Activated naive CD4-positive, alpha-beta T cell treated with anti-CD3 and anti-CD28 coated beads for 36 hours (primary cell): ENCODE measurements at regions of chr4 and their contacts with region 1.

Region 1: GRCh38 chr4:1200425-1201035 is 28.1 kb upstream of the SPON2 start:
- DNase-seq: no peak
- H3K4me3 Mint-ChIP-seq: peak overlapping the region; percentile 60
- H3K27ac Mint-ChIP-seq: no peak overlapping the region
- H3K4me1 Mint-ChIP-seq: peaks cover 19% of the 10 kb centered on the region
- H3K27me3 Mint-ChIP-seq: no peaks in the 10 kb centered on the region

Region 2: GRCh38 chr4:373062-373839 is 827.3 kb before region 1 on chr4:
- CTCF ChIA-PET with region 1: no interaction called
- intact Hi-C with region 1: no loop called
- DNase-seq: no peak
- H3K4me3 Mint-ChIP-seq: no peak overlapping the region
- H3K27ac Mint-ChIP-seq: no peak overlapping the region
- H3K4me1 Mint-ChIP-seq: no peaks in the 10 kb centered on the region
- H3K27me3 Mint-ChIP-seq: no peaks in the 10 kb centered on the region

Region 3: GRCh38 chr4:1174941-1175657 is 25.4 kb before region 1 on chr4:
- CTCF ChIA-PET with region 1: no interaction called
- intact Hi-C with region 1: no loop called
- DNase-seq: no peak
- H3K4me3 Mint-ChIP-seq: no peak overlapping the region
- H3K27ac Mint-ChIP-seq: no peak overlapping the region
- H3K4me1 Mint-ChIP-seq: peaks cover 2% of the 10 kb centered on the region
- H3K27me3 Mint-ChIP-seq: peaks cover 25% of the 10 kb centered on the region

Region 4: DNA sequence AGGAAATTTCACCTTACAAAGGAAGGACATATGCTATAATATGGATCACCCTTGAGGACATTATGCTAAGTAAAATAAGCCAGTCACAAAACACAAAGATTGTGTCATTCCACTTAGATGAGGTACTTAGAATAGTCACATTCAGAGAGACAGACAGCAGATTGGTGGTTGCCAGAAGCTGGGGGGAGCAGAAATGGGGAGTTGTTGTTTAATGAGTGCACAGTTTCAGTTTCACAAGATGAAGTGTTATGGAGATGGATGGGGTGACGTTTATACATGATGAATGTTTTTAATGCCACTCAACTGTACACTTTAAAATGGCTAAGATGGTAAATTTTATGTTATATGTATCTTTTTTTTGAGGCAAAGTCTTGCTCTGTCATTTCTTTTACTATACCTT is 13.3 kb before region 1 on chr4:
- CTCF ChIA-PET with region 1: interaction called, 3 read pairs
- intact Hi-C with region 1: loop called (anchors 2 kb)
- DNase-seq: peak; percentile 49
- H3K4me3 Mint-ChIP-seq: no peak overlapping the region
- H3K27ac Mint-ChIP-seq: no peak overlapping the region
- H3K4me1 Mint-ChIP-seq: peaks cover 11% of the 10 kb centered on the region
- H3K27me3 Mint-ChIP-seq: peaks cover 4% of the 10 kb centered on the region